Sigmoid colon (tissue), 7 donors: ENCODE measurements at regions of chr2 and their contacts with region 1.

Region 1: GRCh38 chr2:189633392-189633811 is 27.9 kb upstream of the ASNSD1 start:
- DNase-seq: no peak
- H3K4me3 ChIP-seq: no peak overlapping the region
- H3K27ac ChIP-seq: no peak overlapping the region
- H3K4me1 ChIP-seq: peaks cover 0 to 27% (median 16%) of the 10 kb centered on the region in 4 donors
- H3K27me3 ChIP-seq: no peaks in the 10 kb centered on the region
- CTCF ChIP-seq: no peak
- EP300 ChIP-seq: no peak
- POLR2A ChIP-seq: no peak

Region 2: GRCh38 chr2:189440947-189441708 is 192.3 kb before region 1 on chr2 and contains the start of gene WDR75:
- intact Hi-C with region 1: loop called (anchors 5 kb)
- DNase-seq: peak; percentile 96
- H3K4me3 ChIP-seq: peak within 1 kb of the TSS; percentile 59 to 73 (median 72)
- H3K27ac ChIP-seq: peak within 1 kb of the TSS; percentile 90 to 95 (median 92)
- H3K4me1 ChIP-seq: peaks cover 0 to 30% (median 19%) of the 10 kb centered on the region in 4 donors
- H3K27me3 ChIP-seq: no peaks in the 10 kb centered on the region
- CTCF ChIP-seq: no peak
- EP300 ChIP-seq: no peak
- POLR2A ChIP-seq: peak; percentile 64 to 76
- total RNA-seq, gene WDR75: 25.8 to 43.5 (median 32.4) TPM

Region 3: DNA sequence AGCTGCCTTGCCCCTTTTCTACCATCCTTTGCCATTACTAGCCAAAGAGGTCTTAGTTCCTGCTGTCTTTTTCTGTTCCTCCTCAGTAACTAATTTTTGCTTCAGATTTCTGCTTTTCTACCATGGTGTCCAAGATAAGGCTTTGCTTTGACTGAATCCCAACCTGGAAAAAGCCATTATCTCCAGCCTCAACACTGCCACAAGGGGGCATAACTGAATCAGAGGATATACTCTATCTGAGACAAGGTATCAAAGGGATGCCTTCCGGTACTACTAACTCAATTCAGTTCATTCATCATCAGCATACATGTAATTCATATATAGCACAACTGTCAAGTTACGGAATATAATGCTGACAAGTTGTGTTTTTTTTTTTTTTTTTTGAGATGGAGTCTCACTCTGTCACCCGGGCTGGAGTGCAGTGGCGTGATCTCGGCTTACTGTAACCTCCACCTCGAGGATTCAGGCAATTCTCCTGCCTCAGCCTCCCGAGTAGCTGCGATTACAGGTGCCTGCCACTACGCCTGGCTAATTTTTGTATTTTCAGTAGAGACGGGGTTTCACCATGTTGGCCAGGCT is 117.8 kb after region 1 on chr2:
- intact Hi-C with region 1: no loop called
- DNase-seq: no peak
- H3K4me3 ChIP-seq: no peak overlapping the region
- H3K27ac ChIP-seq: no peak overlapping the region
- H3K4me1 ChIP-seq: no peaks in the 10 kb centered on the region
- H3K27me3 ChIP-seq: no peaks in the 10 kb centered on the region
- CTCF ChIP-seq: peak; percentile 19 to 50 (median 32)
- EP300 ChIP-seq: no peak
- POLR2A ChIP-seq: no peak

Region 4: DNA sequence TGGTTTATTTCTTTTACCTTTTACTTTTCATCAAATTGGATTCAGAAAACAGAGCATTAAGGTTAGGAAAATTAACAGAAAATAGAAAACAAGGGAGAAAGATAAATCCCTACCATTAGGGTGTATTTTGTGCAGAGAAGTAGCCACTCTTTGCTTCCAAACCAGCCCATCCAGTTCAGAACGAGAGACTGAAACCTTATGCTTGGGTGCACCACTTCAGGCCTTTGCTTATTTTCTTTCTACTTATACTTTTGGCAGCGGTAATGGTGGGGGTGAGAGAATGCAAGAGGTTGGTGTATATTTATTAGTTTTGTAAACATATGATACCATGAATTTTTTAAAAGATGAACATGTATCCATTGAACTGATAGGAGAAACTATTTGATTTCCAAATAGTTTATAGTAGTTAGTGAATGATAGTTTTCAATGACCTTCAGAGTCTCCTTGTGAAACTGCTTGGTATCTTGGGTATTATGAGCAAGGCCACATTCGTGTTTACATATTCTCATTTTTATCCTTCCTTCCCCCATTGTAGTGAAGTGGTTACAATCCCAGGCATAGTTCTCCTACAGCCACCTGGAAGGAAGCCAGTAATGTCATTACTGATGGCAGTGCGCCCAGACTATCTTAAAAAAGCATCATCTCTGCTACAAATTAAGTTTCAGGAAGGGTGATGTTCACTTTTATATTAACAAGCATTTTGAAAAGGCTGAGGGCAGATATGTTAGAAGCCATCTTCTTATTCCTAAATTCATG is 835.6 kb after region 1 on chr2:
- intact Hi-C with region 1: no loop called
- DNase-seq: peak; percentile 92
- H3K4me3 ChIP-seq: no peak overlapping the region
- H3K27ac ChIP-seq: peak overlapping the region; percentile 80 to 87 (median 86)
- H3K4me1 ChIP-seq: peaks cover 0 to 43% (median 41%) of the 10 kb centered on the region in 4 donors
- H3K27me3 ChIP-seq: no peaks in the 10 kb centered on the region
- CTCF ChIP-seq: no peak
- EP300 ChIP-seq: peak in 3 of 4 donors; percentile 36 to 72 (median 69)
- POLR2A ChIP-seq: no peak